HepG2 (cell line): ENCODE measurements at regions of chr15 and their contacts with region 1.

Region 1: GRCh38 chr15:72783563-72784237 is at the start of gene ADPGK:
- DNase-seq: peak; percentile 73
- ATAC-seq: peak; percentile 87
- H3K4me3 ChIP-seq: peak within 1 kb of the TSS; percentile 85 to 94 (median 93)
- H3K27ac ChIP-seq: peak within 1 kb of the TSS; percentile 77
- H3K4me1 ChIP-seq: peaks cover 46% of the 10 kb centered on the region
- H3K27me3 ChIP-seq: peaks cover 0 to 4% of the 10 kb centered on the region in 2 experiments; a peak in 1 of 5 replicates
- CTCF ChIP-seq: peak; percentile 9; the same call in 1 of the 2 replicates
- EP300 ChIP-seq: peak; percentile 49 to 63; a peak in 2 of 4 replicates
- POLR2A ChIP-seq: peak; percentile 92 to 96
- RAD21 ChIP-seq: 0 out of 2 replicates have a peak, but pooled peaks have one; percentile 38
- total RNA-seq, gene ADPGK: 33.5 and 67.5 TPM in 2 replicates

Region 2: GRCh38 chr15:72722071-72722696 is 61.5 kb before region 1 on chr15:
- CTCF ChIA-PET with region 1: no interaction called
- POLR2A ChIA-PET with region 1: no interaction called
- in situ Hi-C with region 1: no loop called
- intact Hi-C with region 1: loop called (anchors 5 kb)
- DNase-seq: peak; percentile 56
- ATAC-seq: peak; percentile 57
- H3K4me3 ChIP-seq: no peak overlapping the region
- H3K27ac ChIP-seq: no peak overlapping the region
- H3K4me1 ChIP-seq: peaks cover 13% of the 10 kb centered on the region
- H3K27me3 ChIP-seq: no peaks in the 10 kb centered on the region
- CTCF ChIP-seq: peak; percentile 82
- EP300 ChIP-seq: no peak
- POLR2A ChIP-seq: no peak
- RAD21 ChIP-seq: peak; percentile 38

Region 3: DNA sequence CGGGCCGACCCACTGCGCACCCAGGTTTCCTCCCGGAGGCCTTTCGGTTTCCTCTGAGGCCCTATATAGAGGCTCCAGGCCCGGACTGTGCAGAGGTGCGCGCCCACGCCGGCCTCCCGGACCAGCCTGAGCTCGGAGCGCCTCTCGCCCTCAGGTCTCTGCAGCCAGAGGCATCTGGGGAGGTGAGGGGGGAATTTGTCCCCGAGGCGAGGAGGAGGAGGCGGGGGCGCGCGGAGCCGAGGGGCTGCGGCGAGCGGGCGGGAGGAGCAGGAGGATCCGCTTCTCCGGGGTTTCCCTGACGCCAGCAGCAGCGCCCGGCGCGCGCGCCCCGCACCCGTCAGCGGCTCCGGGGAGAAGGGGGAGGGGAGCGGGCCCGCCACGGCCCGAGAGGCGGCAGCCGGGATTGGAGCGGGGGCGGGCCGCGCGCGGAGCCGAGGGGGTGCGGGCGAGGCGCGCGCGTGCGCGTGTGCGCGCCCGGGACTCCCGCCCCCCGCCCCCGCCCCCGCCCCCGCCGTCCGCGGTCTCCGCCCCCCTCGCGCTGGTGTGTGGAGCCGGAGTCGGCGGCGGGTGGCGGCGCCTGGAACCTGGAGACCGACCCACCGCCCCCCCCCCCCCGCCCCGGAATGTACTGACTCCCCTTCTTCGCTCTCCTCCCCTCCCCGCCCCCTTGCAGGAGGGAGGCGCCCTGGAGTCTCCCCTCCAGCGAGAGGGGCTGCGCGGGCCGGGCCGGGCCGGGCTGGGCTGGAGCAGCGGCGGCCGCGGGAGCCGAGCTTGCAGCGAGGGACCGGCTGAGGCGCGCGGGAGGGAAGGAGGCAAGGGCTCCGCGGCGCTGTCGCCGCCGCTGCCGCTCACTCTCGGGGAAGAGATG is 268.3 kb after region 1 on chr15 and contains the start of gene NEO1:
- CTCF ChIA-PET with region 1: no interaction called
- POLR2A ChIA-PET with region 1: no interaction called
- in situ Hi-C with region 1: no loop called
- intact Hi-C with region 1: loop called (anchors 5 kb)
- DNase-seq: peak; percentile 59
- ATAC-seq: peak; percentile 87
- H3K4me3 ChIP-seq: peak within 1 kb of the TSS; percentile 82 to 92 (median 88)
- H3K27ac ChIP-seq: peak within 1 kb of the TSS; percentile 80
- H3K4me1 ChIP-seq: peaks cover 14% of the 10 kb centered on the region
- H3K27me3 ChIP-seq: peaks cover 0 to 11% of the 10 kb centered on the region in 2 experiments; a peak in 2 of 5 replicates
- CTCF ChIP-seq: no peak
- EP300 ChIP-seq: no peak
- POLR2A ChIP-seq: peak; percentile 28 to 37; a peak in 2 of 4 replicates
- RAD21 ChIP-seq: no peak
- total RNA-seq, gene NEO1: 10.0 and 11.0 TPM in 2 replicates